Activated CD4-positive, alpha-beta memory T cell treated with anti-CD3 and anti-CD28 coated beads for 36 hours (primary cell): ENCODE measurements at regions of chr3 and their contacts with region 1.

Region 1: DNA sequence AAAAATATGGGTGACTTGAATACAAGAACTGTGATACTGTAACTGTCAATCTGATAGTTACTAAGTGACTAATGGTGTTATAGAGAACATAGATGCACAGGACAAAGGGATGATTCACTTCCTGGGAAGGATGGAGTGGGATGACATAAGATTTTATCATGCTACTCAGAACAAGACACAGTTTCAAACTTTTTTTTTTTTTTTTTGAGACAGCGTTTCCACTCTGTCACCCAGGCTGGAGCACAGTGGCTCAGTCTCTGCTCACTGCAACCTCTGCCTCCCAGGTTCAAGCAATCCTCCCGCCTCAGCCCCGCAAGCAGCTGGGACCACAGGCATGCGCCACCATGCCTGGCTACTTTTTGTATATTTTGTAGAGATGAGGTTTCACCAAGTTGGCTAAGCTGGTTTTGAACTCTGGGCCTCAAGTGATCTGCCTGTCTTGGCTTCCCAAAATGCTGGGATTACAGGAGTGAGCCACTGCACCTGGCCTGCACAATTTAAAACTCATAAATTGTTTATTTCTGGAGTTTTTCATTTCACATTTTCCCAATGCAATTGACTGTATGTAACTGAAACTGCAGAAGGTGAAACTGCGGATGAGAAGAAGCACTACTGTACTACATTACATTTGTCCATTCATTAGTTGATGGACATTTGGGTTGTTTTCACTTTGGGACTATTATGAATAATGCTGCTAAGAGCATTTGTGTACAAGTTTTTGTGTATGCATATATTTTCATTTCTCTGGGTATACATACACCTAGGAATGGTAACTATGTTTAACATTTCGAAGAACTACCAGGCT is 40.6 kb downstream of the ADIPOQ start:
- DNase-seq: peak; percentile 80
- H3K4me3 Mint-ChIP-seq: peak overlapping the region; percentile 59
- H3K27ac Mint-ChIP-seq: peak overlapping the region; percentile 90
- H3K4me1 Mint-ChIP-seq: peaks cover 63% of the 10 kb centered on the region
- H3K27me3 Mint-ChIP-seq: no peaks in the 10 kb centered on the region

Region 2: DNA sequence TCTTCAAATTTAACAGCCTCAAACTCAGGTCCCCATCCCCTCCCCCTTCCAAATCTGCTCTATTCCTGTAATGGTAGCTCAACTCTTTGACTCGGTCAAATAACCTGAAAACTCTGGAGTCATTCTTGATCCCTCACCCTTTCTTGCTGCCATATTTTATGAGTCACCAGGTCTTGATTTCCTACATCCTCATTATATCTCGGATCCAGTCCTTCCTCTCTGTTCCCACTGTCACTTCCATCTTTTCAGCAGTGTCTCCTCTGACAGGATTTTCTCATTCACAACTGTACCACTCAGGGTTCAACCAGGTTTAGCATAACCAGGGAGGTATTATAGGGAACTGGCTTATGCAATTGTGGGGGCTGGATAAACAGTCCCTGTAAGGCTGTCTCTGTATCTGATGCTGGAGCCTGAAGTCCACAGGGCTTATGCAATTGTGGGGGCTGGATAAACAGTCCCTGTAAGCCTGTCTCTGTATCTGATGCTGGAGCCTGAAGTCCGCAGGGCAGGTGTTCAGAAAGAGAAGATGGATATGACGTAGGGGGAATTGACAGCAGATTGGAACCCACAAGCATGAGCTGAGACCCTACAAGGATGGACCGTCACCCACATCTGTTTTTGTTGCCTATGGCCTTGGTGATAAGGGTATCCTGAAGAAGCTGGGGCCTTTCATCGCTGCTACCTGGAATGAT is 252.0 kb before region 1 on chr3:
- CTCF ChIA-PET with region 1: no interaction called
- POLR2A ChIA-PET with region 1: no interaction called
- intact Hi-C with region 1: no loop called
- DNase-seq: no peak
- H3K4me3 Mint-ChIP-seq: no peak overlapping the region
- H3K27ac Mint-ChIP-seq: no peak overlapping the region
- H3K4me1 Mint-ChIP-seq: no peaks in the 10 kb centered on the region
- H3K27me3 Mint-ChIP-seq: peaks cover 7% of the 10 kb centered on the region

Region 3: GRCh38 chr3:186854954-186855353 is 28.1 kb before region 1 on chr3:
- CTCF ChIA-PET with region 1: interaction called, 11 read pairs
- POLR2A ChIA-PET with region 1: interaction called, 31 read pairs
- intact Hi-C with region 1: no loop called
- DNase-seq: no peak
- H3K4me3 Mint-ChIP-seq: no peak overlapping the region
- H3K27ac Mint-ChIP-seq: no peak overlapping the region
- H3K4me1 Mint-ChIP-seq: peaks cover 17% of the 10 kb centered on the region
- H3K27me3 Mint-ChIP-seq: no peaks in the 10 kb centered on the region

Region 4: DNA sequence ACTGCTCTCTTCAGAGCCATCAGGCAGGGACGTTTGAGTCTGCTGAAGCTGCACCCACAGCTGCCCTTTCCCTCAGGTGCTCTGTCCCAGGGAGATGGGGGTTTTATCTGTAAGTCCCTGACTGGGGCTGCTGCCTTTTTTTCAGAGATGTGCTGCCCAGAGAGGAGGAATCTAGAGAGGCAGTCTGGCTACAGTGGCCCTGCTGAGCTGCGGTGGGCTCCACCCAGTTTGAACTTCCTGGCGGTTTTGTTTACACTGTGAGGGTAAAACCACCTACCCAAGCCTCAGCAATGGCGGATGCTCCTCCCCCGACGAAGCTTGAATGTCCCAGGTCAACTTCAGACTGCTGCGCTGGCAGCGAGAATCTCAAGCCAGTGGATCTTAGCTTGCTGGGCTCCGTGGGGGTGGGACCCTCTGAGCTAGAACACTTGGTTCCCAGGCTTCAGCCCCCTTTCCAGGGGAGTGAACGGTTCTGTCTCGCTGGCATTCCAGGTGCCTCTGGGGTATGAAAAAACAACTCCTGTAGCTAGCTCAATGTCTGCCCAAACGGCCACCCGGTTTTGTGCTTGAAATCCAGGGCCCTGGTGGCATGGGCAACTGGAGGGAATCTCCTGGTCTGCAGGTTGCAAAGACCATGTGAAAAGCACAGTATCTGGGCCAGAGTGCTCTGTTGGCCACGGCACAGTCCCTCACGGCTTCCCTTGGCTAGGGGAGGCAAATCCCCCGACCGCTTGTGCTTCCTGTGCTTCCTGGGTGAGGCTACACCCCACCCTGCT is 26.2 kb after region 1 on chr3:
- CTCF ChIA-PET with region 1: no interaction called
- POLR2A ChIA-PET with region 1: interaction called, 5 read pairs
- intact Hi-C with region 1: loop called (anchors 2 kb)
- DNase-seq: peak; percentile 87
- H3K4me3 Mint-ChIP-seq: peak overlapping the region; percentile 59
- H3K27ac Mint-ChIP-seq: peak overlapping the region; percentile 84
- H3K4me1 Mint-ChIP-seq: peaks cover 19% of the 10 kb centered on the region
- H3K27me3 Mint-ChIP-seq: no peaks in the 10 kb centered on the region

Region 5: GRCh38 chr3:186985661-186986364 is 102.7 kb after region 1 on chr3:
- CTCF ChIA-PET with region 1: no interaction called
- POLR2A ChIA-PET with region 1: interaction called, 3 read pairs
- intact Hi-C with region 1: loop called (anchors 1 kb)
- DNase-seq: no peak
- H3K4me3 Mint-ChIP-seq: no peak overlapping the region
- H3K27ac Mint-ChIP-seq: no peak overlapping the region
- H3K4me1 Mint-ChIP-seq: peaks cover 41% of the 10 kb centered on the region
- H3K27me3 Mint-ChIP-seq: no peaks in the 10 kb centered on the region

Region 6: GRCh38 chr3:187041362-187042307 is 158.6 kb after region 1 on chr3:
- CTCF ChIA-PET with region 1: no interaction called
- POLR2A ChIA-PET with region 1: interaction called, 3 read pairs
- intact Hi-C with region 1: loop called (anchors 1 kb)
- DNase-seq: peak; percentile 70
- H3K4me3 Mint-ChIP-seq: peak overlapping the region; percentile 47
- H3K27ac Mint-ChIP-seq: peak overlapping the region; percentile 92
- H3K4me1 Mint-ChIP-seq: peaks cover 82% of the 10 kb centered on the region
- H3K27me3 Mint-ChIP-seq: no peaks in the 10 kb centered on the region